ENCODE measurements at regions of chr1 and their contacts with region 1.

Region 1: DNA sequence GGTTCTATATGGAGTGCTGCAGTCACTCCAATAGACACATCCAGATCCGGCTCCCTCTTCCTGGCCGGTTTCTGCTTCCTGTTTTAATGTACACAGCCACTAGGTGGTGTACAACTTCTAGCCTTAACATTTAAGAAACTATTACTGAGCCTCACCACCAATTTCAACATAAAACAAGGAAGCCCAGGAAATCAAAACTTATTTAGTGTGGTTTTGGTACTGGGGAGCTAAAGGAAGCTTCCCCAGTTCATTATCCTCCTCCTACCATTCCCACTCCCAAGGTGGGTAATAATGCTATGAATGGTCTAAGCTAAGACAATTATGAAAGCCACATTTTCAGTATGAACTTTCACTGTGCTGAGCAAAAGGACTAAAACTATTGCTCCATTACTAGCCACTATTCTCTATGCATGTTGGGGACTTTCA is 25.5 kb upstream of the MTMR11 start:
- DNase-seq: peak; percentile 83
- H3K4me3 ChIP-seq: no peak overlapping the region
- H3K27ac ChIP-seq: peak overlapping the region; percentile 29
- H3K4me1 ChIP-seq: 0 out of 2 replicates have a peak, but pooled peaks cover 3% of the 10 kb centered on the region
- H3K27me3 ChIP-seq: no peaks in the 10 kb centered on the region

Region 2: GRCh38 chr1:150053926-150054325 is 91.8 kb after region 1 on chr1:
- in situ Hi-C with region 1: loop called (anchors 10 kb)
- DNase-seq: no peak
- H3K4me3 ChIP-seq: no peak overlapping the region
- H3K27ac ChIP-seq: no peak overlapping the region
- H3K4me1 ChIP-seq: peaks cover 5% of the 10 kb centered on the region
- H3K27me3 ChIP-seq: no peaks in the 10 kb centered on the region

Region 3: GRCh38 chr1:150176593-150176992 is 214.5 kb after region 1 on chr1:
- in situ Hi-C with region 1: loop called (anchors 10 kb)
- DNase-seq: no peak
- H3K4me3 ChIP-seq: no peak overlapping the region
- H3K27ac ChIP-seq: no peak overlapping the region
- H3K4me1 ChIP-seq: no peaks in the 10 kb centered on the region
- H3K27me3 ChIP-seq: no peaks in the 10 kb centered on the region

Measured in GM23248 (cell line).